PC-9 (cell line): ENCODE measurements at regions of chr7 and their contacts with region 1.

Region 1: GRCh38 chr7:27662490-27663205 is at the start of gene HIBADH:
- DNase-seq: peak; percentile 99
- H3K4me3 ChIP-seq: peak within 1 kb of the TSS; percentile 79
- H3K27ac ChIP-seq: peak within 1 kb of the TSS; percentile 64
- H3K4me1 ChIP-seq: peaks cover 22% of the 10 kb centered on the region
- H3K27me3 ChIP-seq: no peaks in the 10 kb centered on the region
- CTCF ChIP-seq: no peak; the same call in 1 of the 2 replicates
- total RNA-seq, gene HIBADH: 72.4 and 73.9 TPM in 2 replicates

Region 2: DNA sequence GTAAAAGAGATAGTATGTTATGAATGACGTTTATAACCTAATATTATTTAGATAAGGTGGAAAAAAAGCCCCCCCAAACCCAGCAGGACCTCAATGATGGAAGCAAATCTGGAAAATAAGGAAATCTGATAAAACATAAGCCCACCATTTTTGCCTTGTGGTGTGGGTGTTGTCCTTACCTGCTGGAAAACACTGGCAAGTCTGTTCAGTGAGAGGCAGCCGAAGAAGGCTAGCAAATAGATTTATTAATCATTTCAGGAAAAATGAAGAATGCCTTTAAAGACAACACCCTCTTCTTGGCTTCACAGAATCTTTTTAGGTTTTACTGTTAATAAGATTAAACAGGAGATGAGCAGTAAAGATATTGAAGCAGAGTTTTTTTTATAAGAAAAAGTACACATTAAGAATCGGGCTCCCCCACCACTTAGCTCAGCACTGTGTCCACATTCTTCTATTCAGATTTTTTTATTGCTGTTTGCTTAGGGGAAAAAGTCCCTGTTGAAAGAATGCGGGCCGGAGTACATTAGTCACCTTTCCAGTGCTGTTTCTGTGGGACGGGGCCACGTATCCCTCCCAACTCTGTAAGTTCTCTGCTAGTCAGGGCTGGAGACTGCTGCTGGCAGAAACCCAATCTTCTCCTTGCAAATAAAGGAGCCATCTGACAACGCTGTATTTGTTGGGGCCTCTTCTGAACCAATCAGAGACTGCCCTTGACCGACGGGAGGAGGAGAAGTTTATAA is 315.9 kb before region 1 on chr7:
- CTCF ChIA-PET with region 1: no interaction called
- POLR2A ChIA-PET with region 1: interaction called, 11 read pairs
- intact Hi-C with region 1: no loop called
- DNase-seq: peak; percentile 85 to 98
- H3K4me3 ChIP-seq: peak overlapping the region; percentile 35; the same call in 1 of the 2 replicates
- H3K27ac ChIP-seq: peak overlapping the region; percentile 70
- H3K4me1 ChIP-seq: peaks cover 52% of the 10 kb centered on the region
- H3K27me3 ChIP-seq: no peaks in the 10 kb centered on the region
- CTCF ChIP-seq: no peak

Region 3: GRCh38 chr7:27472043-27472442 is 190.6 kb before region 1 on chr7:
- CTCF ChIA-PET with region 1: no interaction called
- POLR2A ChIA-PET with region 1: no interaction called
- intact Hi-C with region 1: no loop called
- DNase-seq: no peak
- H3K4me3 ChIP-seq: no peak overlapping the region
- H3K27ac ChIP-seq: no peak overlapping the region
- H3K4me1 ChIP-seq: no peaks in the 10 kb centered on the region
- H3K27me3 ChIP-seq: peaks cover 13% of the 10 kb centered on the region
- CTCF ChIP-seq: no peak

Region 4: DNA sequence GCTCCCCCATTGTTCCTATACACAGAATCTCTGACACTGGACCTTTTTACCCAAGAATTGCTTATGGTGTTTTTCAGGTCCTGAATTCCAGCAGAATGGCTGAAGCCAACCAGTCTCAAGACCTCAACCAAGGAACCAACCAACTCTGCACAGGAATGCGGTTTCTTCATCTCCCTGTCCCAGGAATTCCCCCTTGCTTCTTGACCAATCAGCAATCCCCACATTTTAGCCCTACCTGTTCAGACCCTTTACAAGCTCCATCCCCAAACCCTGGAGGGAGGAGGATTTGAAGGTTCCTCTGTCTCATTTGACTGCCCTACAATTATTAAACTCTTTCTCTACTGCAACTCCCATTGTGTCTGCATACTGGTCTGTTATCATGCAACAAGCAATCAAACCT is 35.5 kb before region 1 on chr7:
- CTCF ChIA-PET with region 1: no interaction called
- POLR2A ChIA-PET with region 1: no interaction called
- intact Hi-C with region 1: no loop called
- DNase-seq: no peak
- H3K4me3 ChIP-seq: no peak overlapping the region
- H3K27ac ChIP-seq: no peak overlapping the region
- H3K4me1 ChIP-seq: no peaks in the 10 kb centered on the region
- H3K27me3 ChIP-seq: no peaks in the 10 kb centered on the region
- CTCF ChIP-seq: no peak

Region 5: DNA sequence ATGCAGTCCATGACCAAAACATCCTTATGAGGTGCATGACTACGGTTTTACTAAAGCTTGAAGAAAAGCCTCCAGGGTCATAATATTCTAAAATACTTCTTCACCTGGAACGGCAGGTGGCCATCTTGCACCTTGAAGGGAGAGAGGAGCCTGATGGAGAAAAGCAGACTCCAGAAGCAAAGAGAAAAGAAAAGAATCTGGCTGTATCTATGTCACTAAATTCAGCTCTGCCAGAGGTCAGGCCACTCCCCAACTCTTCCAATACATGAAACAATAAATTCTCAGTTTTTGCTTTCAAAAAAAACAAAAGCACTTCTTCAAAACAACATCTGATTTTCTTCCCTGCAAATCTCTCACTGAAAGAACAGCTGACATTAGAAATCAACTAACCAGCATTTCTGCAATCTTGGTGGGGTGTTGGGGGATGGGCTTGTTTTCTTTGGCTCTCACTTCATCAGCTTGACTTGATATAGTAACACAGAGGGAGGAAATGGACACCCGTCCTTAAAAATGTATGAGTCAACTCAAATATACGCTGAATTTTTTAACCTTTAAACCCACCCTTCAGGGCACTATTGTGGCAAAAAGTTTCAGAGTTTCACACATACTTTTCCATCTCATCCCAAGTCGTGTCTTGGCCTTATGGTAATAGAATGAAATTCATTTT is 21.6 kb before region 1 on chr7:
- CTCF ChIA-PET with region 1: interaction called, 3 read pairs
- POLR2A ChIA-PET with region 1: interaction called, 4 read pairs
- intact Hi-C with region 1: loop called (anchors 2 kb)
- DNase-seq: peak; percentile 87 to 96
- H3K4me3 ChIP-seq: peak overlapping the region; percentile 8; the same call in 1 of the 2 replicates
- H3K27ac ChIP-seq: peak overlapping the region; percentile 90
- H3K4me1 ChIP-seq: peaks cover 37% of the 10 kb centered on the region
- H3K27me3 ChIP-seq: no peaks in the 10 kb centered on the region
- CTCF ChIP-seq: peak; percentile 40; the same call in 1 of the 2 replicates

Region 6: DNA sequence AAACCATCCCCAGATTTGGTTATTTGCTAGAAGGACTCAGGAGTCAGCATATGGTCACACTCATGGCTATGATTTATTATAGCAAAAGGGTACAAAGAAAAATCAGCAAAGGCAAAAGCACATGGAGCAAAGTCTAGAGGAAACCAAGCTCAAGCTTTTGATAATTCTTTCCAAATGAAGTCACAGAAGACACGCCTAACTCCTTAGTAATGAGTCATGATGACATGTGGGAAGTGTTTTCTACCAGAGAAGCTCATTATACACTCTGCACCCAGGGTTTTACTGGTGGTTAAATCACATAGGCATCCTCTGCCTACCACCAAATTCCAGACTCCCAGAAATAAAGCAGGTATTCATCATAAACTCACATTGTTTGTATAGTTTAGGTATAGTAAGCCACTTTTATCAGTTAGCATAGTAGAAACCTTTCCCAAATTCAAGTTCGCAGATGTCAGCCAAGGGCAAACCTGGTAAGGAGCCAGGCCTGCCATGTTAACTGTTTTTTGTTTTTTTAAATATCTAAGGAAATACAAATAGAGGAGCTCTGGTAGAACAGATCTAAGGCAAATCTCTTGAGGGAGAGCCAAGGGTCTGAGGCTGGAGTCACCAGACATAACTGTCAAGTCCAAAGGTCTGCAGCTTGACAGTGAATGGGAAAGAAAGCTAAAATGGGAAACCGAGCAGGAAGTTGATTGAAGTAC is 15.4 kb after region 1 on chr7:
- CTCF ChIA-PET with region 1: no interaction called
- POLR2A ChIA-PET with region 1: interaction called, 3 read pairs
- intact Hi-C with region 1: loop called (anchors 1 kb)
- DNase-seq: peak; percentile 51 to 98
- H3K4me3 ChIP-seq: peak overlapping the region; percentile 11; the same call in 1 of the 2 replicates
- H3K27ac ChIP-seq: peak overlapping the region; percentile 98
- H3K4me1 ChIP-seq: peaks cover 33% of the 10 kb centered on the region
- H3K27me3 ChIP-seq: no peaks in the 10 kb centered on the region
- CTCF ChIP-seq: no peak

Region 7: DNA sequence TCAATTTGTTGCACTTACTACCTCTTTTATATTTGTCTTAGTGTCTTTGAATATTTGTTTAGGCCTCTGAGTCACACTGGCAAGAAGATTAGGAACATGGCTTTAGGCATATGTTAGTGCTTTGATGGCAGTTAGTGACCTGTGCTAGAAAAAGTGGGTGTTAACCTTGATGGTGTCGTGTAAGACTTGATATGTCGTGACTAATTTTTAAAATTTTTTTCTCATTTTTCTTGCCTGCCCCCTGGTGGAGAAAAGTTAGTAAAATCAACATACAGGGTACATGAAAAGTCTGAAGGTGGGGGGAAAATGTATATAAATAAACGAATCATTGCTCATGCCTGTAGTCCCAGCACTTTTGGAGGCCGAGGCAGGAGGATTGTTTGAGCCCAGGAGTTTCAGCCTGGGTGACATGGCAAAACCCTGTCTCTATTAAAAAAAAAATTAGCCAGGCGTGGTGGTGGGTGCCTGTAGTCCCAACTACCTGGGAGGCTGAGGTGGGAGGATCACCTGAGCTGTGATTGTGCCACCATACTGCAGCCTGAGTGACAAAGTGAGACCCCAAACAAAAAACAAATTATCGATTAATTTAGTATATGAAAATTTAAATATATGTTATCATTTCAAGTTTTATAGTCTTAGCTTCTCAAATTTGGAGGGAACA is 121.9 kb after region 1 on chr7:
- CTCF ChIA-PET with region 1: no interaction called
- POLR2A ChIA-PET with region 1: interaction called, 8 read pairs
- intact Hi-C with region 1: loop called (anchors 1 kb)
- DNase-seq: peak; percentile 53 to 98
- H3K4me3 ChIP-seq: no peak overlapping the region
- H3K27ac ChIP-seq: no peak overlapping the region
- H3K4me1 ChIP-seq: peaks cover 25% of the 10 kb centered on the region
- H3K27me3 ChIP-seq: no peaks in the 10 kb centered on the region
- CTCF ChIP-seq: peak; percentile 92